Natural killer cell (primary cell): ENCODE measurements at regions of chr1 and their contacts with region 1.

Region 1: DNA sequence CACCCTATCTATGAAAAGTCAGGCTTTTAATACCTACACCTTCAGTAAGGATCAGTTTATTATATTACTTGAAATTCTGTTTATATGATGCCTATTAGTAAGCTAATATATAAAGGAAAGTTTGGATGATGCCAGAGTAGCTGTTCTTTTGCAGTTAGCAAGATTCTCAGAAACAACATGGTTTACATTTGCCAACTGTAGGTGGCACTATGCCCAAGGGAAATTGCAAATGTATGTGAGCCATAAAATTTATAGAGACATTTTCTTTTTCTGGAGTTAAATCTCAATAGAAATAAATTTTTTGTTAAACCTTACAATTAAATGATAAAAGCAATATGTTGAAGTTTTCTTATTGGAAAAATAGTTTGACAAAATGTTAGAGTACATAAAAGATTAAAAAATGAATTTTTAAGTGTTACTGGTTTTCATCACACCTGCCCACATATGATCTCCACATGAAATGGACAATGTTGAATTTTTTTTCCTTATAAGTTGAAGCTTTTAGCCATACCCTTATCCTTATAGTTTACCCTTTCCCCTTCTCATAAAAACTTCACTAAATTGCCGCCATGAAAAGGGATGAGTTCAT is 32.1 kb upstream of the EPHX4 start:
- DNase-seq: peak in 1 of 2 donors; percentile 83
- ATAC-seq: peak; percentile 52 to 71 (median 60)
- H3K4me3 ChIP-seq: no peak overlapping the region
- H3K4me3 Mint-ChIP-seq: no peak overlapping the region
- H3K27ac ChIP-seq: no peak overlapping the region
- H3K27ac Mint-ChIP-seq: no peak overlapping the region
- H3K4me1 ChIP-seq: no peaks in the 10 kb centered on the region
- H3K4me1 Mint-ChIP-seq: no peaks in the 10 kb centered on the region
- H3K27me3 ChIP-seq: no peaks in the 10 kb centered on the region
- H3K27me3 Mint-ChIP-seq: peaks cover 5 to 10% of the 10 kb centered on the region in 2 donors
- CTCF ChIP-seq: peak; percentile 86

Region 2: DNA sequence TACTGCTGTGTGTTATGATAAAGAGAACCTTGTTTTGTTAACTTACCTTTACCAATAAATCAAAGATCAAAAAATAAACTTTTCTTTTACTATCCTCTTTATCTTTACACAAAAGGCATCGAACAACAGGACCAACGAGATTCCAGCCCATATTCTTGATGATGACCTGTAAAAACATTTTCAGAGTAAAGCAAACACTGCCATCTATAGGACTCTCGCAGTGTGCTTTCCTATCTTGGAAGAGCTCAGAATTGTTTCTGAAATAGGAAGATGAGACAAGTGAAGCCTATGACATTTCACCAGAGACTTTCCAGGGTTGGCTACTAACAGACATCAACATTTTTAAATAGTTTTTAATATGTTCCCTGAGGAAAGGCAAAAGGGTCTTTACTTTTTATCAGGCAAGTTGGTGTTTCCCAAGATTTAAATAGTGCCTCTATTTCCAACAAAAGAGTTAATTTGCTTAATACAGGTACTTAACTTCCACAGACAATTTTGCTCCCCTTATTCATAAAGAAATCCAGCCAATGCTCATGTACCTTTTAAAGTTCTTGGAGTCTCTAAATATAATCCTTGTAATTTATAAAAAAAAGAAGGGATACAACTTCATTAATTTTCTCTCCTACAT is 293.8 kb after region 1 on chr1:
- intact Hi-C with region 1: loop called (anchors 1 kb)
- DNase-seq: peak in 1 of 2 donors; percentile 55
- ATAC-seq: peak in 2 of 3 donors; percentile 42 to 60
- H3K4me3 ChIP-seq: no peak overlapping the region
- H3K4me3 Mint-ChIP-seq: no peak overlapping the region
- H3K27ac ChIP-seq: no peak overlapping the region
- H3K27ac Mint-ChIP-seq: no peak overlapping the region
- H3K4me1 ChIP-seq: no peaks in the 10 kb centered on the region
- H3K4me1 Mint-ChIP-seq: peaks cover 5 to 16% of the 10 kb centered on the region in 2 donors
- H3K27me3 ChIP-seq: no peaks in the 10 kb centered on the region
- H3K27me3 Mint-ChIP-seq: no peaks in the 10 kb centered on the region
- CTCF ChIP-seq: peak; percentile 47

Region 3: GRCh38 chr1:92298573-92299476 is 301.1 kb after region 1 on chr1 and contains the starts of genes GLMN and RPAP2:
- intact Hi-C with region 1: loop called (anchors 2 kb)
- DNase-seq: peak; percentile 77 to 88
- ATAC-seq: peak; percentile 94 to 98 (median 96)
- H3K4me3 ChIP-seq: peak within 1 kb of the TSS; percentile 83
- H3K4me3 Mint-ChIP-seq: peak within 1 kb of the TSS; percentile 96
- H3K27ac ChIP-seq: peak within 1 kb of the TSS; percentile 91
- H3K27ac Mint-ChIP-seq: peak within 1 kb of the TSS; percentile 95 to 99
- H3K4me1 ChIP-seq: peaks cover 9% of the 10 kb centered on the region
- H3K4me1 Mint-ChIP-seq: peaks cover 31 to 37% of the 10 kb centered on the region in 2 donors
- H3K27me3 ChIP-seq: no peaks in the 10 kb centered on the region
- H3K27me3 Mint-ChIP-seq: no peaks in the 10 kb centered on the region
- CTCF ChIP-seq: no peak
- total RNA-seq, gene GLMN: 19.8 to 25.9 (median 19.9) TPM
- total RNA-seq, gene RPAP2: 39.4 to 45.7 (median 39.8) TPM

Region 4: GRCh38 chr1:92310185-92310597 is 312.5 kb after region 1 on chr1:
- intact Hi-C with region 1: loop called (anchors 1 kb)
- DNase-seq: peak in 1 of 2 donors; percentile 69
- ATAC-seq: peak; percentile 56 to 78 (median 71)
- H3K4me3 ChIP-seq: no peak overlapping the region
- H3K4me3 Mint-ChIP-seq: no peak overlapping the region
- H3K27ac ChIP-seq: no peak overlapping the region
- H3K27ac Mint-ChIP-seq: no peak overlapping the region
- H3K4me1 ChIP-seq: peaks cover 19% of the 10 kb centered on the region
- H3K4me1 Mint-ChIP-seq: peaks cover 12 to 13% of the 10 kb centered on the region in 2 donors
- H3K27me3 ChIP-seq: no peaks in the 10 kb centered on the region
- H3K27me3 Mint-ChIP-seq: no peaks in the 10 kb centered on the region
- CTCF ChIP-seq: peak; percentile 80

Region 5: GRCh38 chr1:92599184-92599583 is 601.5 kb after region 1 on chr1:
- intact Hi-C with region 1: loop called (anchors 1 kb)
- DNase-seq: peak in 1 of 2 donors; percentile 70
- ATAC-seq: peak in 2 of 3 donors; percentile 66 to 69
- H3K4me3 ChIP-seq: no peak overlapping the region
- H3K4me3 Mint-ChIP-seq: no peak overlapping the region
- H3K27ac ChIP-seq: no peak overlapping the region
- H3K27ac Mint-ChIP-seq: peak overlapping the region in 1 of 2 donors; percentile 42
- H3K4me1 ChIP-seq: no peaks in the 10 kb centered on the region
- H3K4me1 Mint-ChIP-seq: no peaks in the 10 kb centered on the region
- H3K27me3 ChIP-seq: no peaks in the 10 kb centered on the region
- H3K27me3 Mint-ChIP-seq: no peaks in the 10 kb centered on the region
- CTCF ChIP-seq: peak; percentile 65

Region 6: DNA sequence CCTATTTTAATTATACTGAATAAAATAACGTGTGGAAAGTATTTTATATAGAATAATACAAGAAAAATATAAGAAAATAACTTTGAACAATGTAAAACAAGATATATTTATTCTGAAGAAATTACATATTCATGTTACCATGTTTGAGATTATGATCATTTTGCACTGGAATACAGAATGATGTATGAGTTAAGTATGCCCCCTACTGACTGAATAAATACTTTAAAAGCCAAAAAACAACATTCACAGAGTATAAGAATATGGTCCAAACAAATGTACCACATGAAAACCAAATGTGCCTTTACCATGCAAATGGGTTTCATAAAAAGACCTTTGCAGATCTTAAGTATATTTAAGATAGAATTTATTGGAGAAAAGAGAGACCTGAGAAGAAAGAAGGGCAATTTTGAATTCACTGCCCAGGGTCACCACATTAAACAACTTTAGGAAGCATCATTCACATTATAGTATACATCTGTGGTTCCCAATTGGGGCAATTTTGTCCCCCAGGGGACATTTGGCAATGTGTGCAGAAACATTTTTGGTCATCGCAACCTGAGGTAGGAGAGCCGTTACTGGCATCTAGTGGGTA is 625.6 kb after region 1 on chr1:
- intact Hi-C with region 1: loop called (anchors 1 kb)
- DNase-seq: peak in 1 of 2 donors; percentile 61
- ATAC-seq: peak in 2 of 3 donors; percentile 38 to 53
- H3K4me3 ChIP-seq: no peak overlapping the region
- H3K4me3 Mint-ChIP-seq: no peak overlapping the region
- H3K27ac ChIP-seq: no peak overlapping the region
- H3K27ac Mint-ChIP-seq: no peak overlapping the region
- H3K4me1 ChIP-seq: no peaks in the 10 kb centered on the region
- H3K4me1 Mint-ChIP-seq: no peaks in the 10 kb centered on the region
- H3K27me3 ChIP-seq: no peaks in the 10 kb centered on the region
- H3K27me3 Mint-ChIP-seq: peaks cover 0 to 3% of the 10 kb centered on the region in 2 donors
- CTCF ChIP-seq: peak; percentile 74

Region 7: DNA sequence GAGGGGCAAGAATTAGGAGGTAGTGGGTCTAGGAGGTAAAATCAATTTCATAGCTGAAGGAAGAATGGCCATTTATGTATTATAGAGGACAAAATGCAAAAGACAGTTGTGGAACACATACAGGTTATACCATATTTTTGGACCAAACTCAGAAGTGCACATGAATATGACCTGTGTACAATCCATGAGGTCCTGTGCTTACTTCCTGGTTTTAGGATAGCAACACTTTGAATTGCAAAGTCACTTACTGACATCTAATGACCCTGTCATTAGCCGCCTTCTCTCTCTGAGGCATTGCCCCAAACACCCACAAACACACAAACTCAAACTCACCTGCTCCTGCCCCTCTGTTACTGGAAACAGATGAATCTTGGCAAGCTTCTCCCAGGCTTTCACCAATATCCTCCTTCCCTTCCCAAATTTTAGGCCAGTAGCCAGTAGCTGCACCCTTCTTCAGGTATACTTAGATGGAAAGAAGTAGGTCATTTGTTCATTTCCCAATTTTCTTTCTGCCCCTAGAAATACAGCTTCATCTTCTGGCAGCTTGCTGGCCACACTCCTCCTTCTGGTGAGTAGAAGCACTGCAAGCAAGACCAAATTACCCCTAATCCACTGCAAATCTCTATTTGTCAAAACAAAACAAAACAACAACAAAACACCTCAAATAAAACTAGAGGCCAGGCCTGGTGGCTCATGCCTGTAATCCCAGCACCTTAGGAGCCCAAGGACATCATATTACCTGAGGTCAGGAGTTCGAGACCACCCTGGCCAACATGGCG is 820.5 kb after region 1 on chr1:
- intact Hi-C with region 1: loop called (anchors 1 kb)
- DNase-seq: peak in 1 of 2 donors; percentile 61
- ATAC-seq: peak; percentile 65 to 78 (median 67)
- H3K4me3 ChIP-seq: no peak overlapping the region
- H3K4me3 Mint-ChIP-seq: no peak overlapping the region
- H3K27ac ChIP-seq: no peak overlapping the region
- H3K27ac Mint-ChIP-seq: no peak overlapping the region
- H3K4me1 ChIP-seq: no peaks in the 10 kb centered on the region
- H3K4me1 Mint-ChIP-seq: no peaks in the 10 kb centered on the region
- H3K27me3 ChIP-seq: no peaks in the 10 kb centered on the region
- H3K27me3 Mint-ChIP-seq: peaks cover 14 to 28% of the 10 kb centered on the region in 2 donors
- CTCF ChIP-seq: peak; percentile 61